Activated CD8-positive, alpha-beta T cell treated with anti-CD3 and anti-CD28 coated beads, Interleukin-2, amount 10 ng/mL, durations not matched to agents 7 days and 5 days (primary cell): ENCODE measurements at regions of chr20 and their contacts with region 1.

Region 1: DNA sequence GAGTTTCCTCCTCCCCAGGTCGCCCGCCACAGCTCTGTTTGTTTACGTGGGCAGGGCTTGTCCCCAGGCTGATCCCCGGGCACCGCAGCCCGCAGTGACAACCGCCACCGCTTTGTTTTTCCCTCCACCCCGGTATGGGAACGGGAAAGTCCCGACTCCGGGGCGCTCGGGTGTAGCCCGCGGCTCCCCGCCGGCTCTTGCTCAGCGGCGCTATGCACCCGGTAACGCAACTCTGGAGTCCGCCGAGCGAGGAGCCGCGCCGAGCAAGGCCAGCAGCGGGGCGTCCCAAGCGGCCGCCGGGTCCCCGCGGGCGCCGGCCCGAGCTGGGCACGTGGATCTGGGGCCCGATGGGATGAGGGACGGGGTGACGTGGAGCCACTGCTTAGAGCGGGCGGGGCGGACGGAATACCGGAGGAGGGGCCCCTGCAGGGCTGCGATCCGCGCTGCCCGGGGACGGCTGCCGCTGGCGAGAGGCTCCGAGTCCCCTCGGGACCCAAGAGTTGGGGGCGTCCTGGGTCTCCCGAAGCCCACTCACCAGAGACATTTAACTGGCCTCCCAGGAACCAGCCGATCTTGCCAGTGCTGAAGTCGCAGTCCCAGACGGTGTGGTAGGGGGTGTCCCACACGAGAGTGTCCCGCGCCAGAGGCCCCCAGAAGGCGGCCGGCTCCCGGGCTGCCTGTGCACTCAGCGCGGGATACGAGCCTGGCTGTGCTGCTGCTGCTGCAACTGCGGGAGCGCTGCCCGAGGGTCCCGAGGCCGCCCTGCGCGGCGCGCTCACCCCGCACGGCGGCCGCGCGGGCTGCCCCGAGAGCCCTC is 497 bp downstream of the ACSS1 start:
- DNase-seq: peak; percentile 80
- ATAC-seq: peak; percentile 54
- H3K4me3 Mint-ChIP-seq: peak overlapping the region; percentile 86
- H3K27ac Mint-ChIP-seq: peak overlapping the region; percentile 87
- H3K4me1 Mint-ChIP-seq: peaks cover 47% of the 10 kb centered on the region
- H3K27me3 Mint-ChIP-seq: peaks cover 13% of the 10 kb centered on the region

Region 2: GRCh38 chr20:25032478-25033280 is 24.8 kb before region 1 on chr20:
- CTCF ChIA-PET with region 1: interaction called, 7 read pairs
- POLR2A ChIA-PET with region 1: interaction called, 31 read pairs
- DNase-seq: no peak
- ATAC-seq: no peak
- H3K4me3 Mint-ChIP-seq: no peak overlapping the region
- H3K27ac Mint-ChIP-seq: no peak overlapping the region
- H3K4me1 Mint-ChIP-seq: peaks cover 30% of the 10 kb centered on the region
- H3K27me3 Mint-ChIP-seq: no peaks in the 10 kb centered on the region

Region 3: GRCh38 chr20:25042531-25043498 is 14.6 kb before region 1 on chr20:
- CTCF ChIA-PET with region 1: interaction called, 3 read pairs
- POLR2A ChIA-PET with region 1: interaction called, 31 read pairs
- DNase-seq: peak; percentile 77
- ATAC-seq: peak; percentile 84
- H3K4me3 Mint-ChIP-seq: peak overlapping the region; percentile 37
- H3K27ac Mint-ChIP-seq: peak overlapping the region; percentile 89
- H3K4me1 Mint-ChIP-seq: peaks cover 51% of the 10 kb centered on the region
- H3K27me3 Mint-ChIP-seq: no peaks in the 10 kb centered on the region